ENCODE measurements at regions of chr10 and their contacts with region 1.

Region 1: DNA sequence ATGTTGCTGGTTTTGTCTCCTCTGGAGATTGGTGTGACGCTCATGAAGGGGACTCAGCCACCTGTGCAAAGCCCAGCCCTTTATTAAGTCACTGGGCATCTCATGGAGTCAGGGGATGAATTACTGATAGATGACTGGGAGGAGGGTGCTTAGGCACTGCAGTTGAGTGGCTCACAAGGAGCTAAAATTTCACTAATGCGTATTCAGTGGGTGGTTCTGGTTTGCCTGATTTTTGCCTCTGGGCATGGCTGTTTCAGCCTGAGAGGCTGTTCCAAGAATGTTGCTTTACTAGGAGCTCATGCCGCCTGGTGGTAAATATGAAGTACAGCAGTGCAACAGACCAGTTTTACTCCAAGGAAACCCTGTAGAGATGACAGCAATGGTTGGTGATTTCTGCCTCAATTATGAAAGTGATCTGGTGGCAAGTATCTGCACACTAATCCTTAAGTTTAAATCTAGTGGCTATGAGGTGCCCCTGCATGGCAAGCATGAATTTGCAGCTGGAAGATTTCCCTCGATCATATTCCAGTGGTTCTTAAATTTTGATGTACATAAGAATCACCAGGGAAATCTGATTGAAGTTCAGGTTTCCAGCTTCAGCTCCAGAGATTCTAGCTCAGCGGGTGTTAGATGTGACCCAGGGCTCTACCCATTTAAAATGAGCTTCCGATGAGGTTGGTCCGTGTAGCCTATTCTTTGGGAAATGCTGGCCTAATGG is 19.9 kb downstream of the ACTA2 start:
- DNase-seq: no peak
- ATAC-seq: peak; percentile 80
- H3K4me3 ChIP-seq: no peak overlapping the region
- H3K27ac ChIP-seq: peak overlapping the region; percentile 56; the same call in 1 of the 2 replicates
- H3K4me1 ChIP-seq: peaks cover 21% of the 10 kb centered on the region
- H3K27me3 ChIP-seq: no peaks in the 10 kb centered on the region
- CTCF ChIP-seq: peak; percentile 85 to 98 (median 95); a peak in 5 of 6 replicates
- EP300 ChIP-seq: no peak
- POLR2A ChIP-seq: no peak
- RAD21 ChIP-seq: peak; percentile 81

Region 2: GRCh38 chr10:88108115-88108610 is 824.5 kb before region 1 on chr10:
- CTCF ChIA-PET with region 1: no interaction called
- POLR2A ChIA-PET with region 1: no interaction called
- RAD21 ChIA-PET with region 1: no interaction called
- SMC1A ChIA-PET with region 1: no interaction called
- in situ Hi-C with region 1: no loop called
- intact Hi-C with region 1: no loop called
- DNase-seq: peak; percentile 94
- ATAC-seq: peak; percentile 56
- H3K4me3 ChIP-seq: no peak overlapping the region
- H3K27ac ChIP-seq: peak overlapping the region; percentile 92
- H3K4me1 ChIP-seq: peaks cover 92% of the 10 kb centered on the region
- H3K27me3 ChIP-seq: no peaks in the 10 kb centered on the region
- CTCF ChIP-seq: peak; percentile 39 to 46 (median 45); a peak in 5 of 6 replicates
- EP300 ChIP-seq: peak; percentile 69 to 76; a peak in 2 of 4 replicates
- POLR2A ChIP-seq: no peak
- RAD21 ChIP-seq: peak; percentile 41; the same call in 1 of the 2 replicates

Region 3: GRCh38 chr10:88810196-88810961 is 122.3 kb before region 1 on chr10:
- CTCF ChIA-PET with region 1: interaction called, 17 read pairs
- POLR2A ChIA-PET with region 1: no interaction called
- RAD21 ChIA-PET with region 1: interaction called, 10 read pairs
- SMC1A ChIA-PET with region 1: interaction called, 6 read pairs
- in situ Hi-C with region 1: no loop called
- intact Hi-C with region 1: no loop called
- DNase-seq: no peak
- ATAC-seq: peak; percentile 91
- H3K4me3 ChIP-seq: no peak overlapping the region
- H3K27ac ChIP-seq: no peak overlapping the region
- H3K4me1 ChIP-seq: no peaks in the 10 kb centered on the region
- H3K27me3 ChIP-seq: peaks cover 0 to 2% of the 10 kb centered on the region in 2 experiments; a peak in 2 of 4 replicates
- CTCF ChIP-seq: peak; percentile 70 to 77 (median 75)
- EP300 ChIP-seq: no peak
- POLR2A ChIP-seq: no peak
- RAD21 ChIP-seq: peak; percentile 79

Region 4: GRCh38 chr10:88841316-88842111 is 91.2 kb before region 1 on chr10:
- CTCF ChIA-PET with region 1: interaction called, 895 read pairs
- POLR2A ChIA-PET with region 1: interaction called, 64 read pairs
- RAD21 ChIA-PET with region 1: interaction called, 390 read pairs
- SMC1A ChIA-PET with region 1: interaction called, 575 read pairs
- in situ Hi-C with region 1: loop called (anchors 5 kb)
- intact Hi-C with region 1: no loop called
- DNase-seq: no peak
- ATAC-seq: no peak
- H3K4me3 ChIP-seq: no peak overlapping the region
- H3K27ac ChIP-seq: no peak overlapping the region
- H3K4me1 ChIP-seq: peaks cover 5% of the 10 kb centered on the region; the same call in 1 of the 2 replicates
- H3K27me3 ChIP-seq: no peaks in the 10 kb centered on the region
- CTCF ChIP-seq: no peak
- EP300 ChIP-seq: no peak
- POLR2A ChIP-seq: no peak
- RAD21 ChIP-seq: no peak

Region 5: DNA sequence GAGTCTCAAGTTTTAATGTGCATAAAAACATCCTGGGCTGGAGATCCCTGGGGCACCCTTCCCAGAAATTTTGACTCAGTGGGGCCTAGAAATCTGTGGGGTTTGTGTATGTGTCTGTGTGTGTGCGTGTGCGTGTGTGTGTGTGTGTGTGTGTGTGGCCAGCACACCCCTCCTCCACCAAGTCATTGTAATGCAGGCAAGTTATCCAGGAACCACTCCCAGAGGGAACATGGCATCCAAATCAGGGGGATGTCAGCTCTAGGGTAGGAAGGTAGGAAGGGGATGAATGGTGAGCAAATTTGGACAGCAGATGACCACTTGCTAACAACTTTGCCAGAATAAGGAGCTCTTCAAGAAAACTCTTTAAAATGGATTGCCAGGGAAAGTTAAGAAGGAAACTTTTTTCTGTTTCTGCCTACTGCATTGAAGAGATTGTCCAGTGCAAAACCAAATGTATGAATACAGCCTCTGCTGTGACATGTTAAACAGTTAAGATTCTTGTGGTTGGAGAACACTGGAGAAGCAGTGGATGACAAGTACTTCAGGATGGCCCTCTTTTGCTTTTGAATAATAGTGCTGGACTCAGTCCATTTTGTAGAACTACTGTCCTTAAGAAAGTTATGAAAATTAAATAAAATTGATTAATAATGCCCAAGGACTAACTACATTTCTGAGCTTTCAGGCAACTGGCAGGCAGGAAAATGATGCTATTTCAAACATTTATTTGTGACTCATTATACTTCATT is 40.3 kb before region 1 on chr10:
- CTCF ChIA-PET with region 1: interaction called, 64 read pairs
- POLR2A ChIA-PET with region 1: interaction called, 3 read pairs
- RAD21 ChIA-PET with region 1: interaction called, 74 read pairs
- SMC1A ChIA-PET with region 1: interaction called, 110 read pairs
- in situ Hi-C with region 1: no loop called
- intact Hi-C with region 1: no loop called
- DNase-seq: no peak
- ATAC-seq: no peak
- H3K4me3 ChIP-seq: no peak overlapping the region
- H3K27ac ChIP-seq: no peak overlapping the region
- H3K4me1 ChIP-seq: peaks cover 44% of the 10 kb centered on the region
- H3K27me3 ChIP-seq: no peaks in the 10 kb centered on the region
- CTCF ChIP-seq: no peak
- EP300 ChIP-seq: no peak
- POLR2A ChIP-seq: no peak
- RAD21 ChIP-seq: no peak

Region 6: GRCh38 chr10:88944813-88945212 is 12.1 kb after region 1 on chr10:
- CTCF ChIA-PET with region 1: interaction called, 42 read pairs
- POLR2A ChIA-PET with region 1: interaction called, 3 read pairs
- RAD21 ChIA-PET with region 1: interaction called, 21 read pairs
- SMC1A ChIA-PET with region 1: interaction called, 28 read pairs
- in situ Hi-C with region 1: no loop called
- intact Hi-C with region 1: no loop called
- DNase-seq: no peak
- ATAC-seq: peak; percentile 91
- H3K4me3 ChIP-seq: no peak overlapping the region
- H3K27ac ChIP-seq: 0 out of 2 replicates have a peak overlapping the region, but pooled peaks have one; percentile 45
- H3K4me1 ChIP-seq: peaks cover 4% of the 10 kb centered on the region
- H3K27me3 ChIP-seq: no peaks in the 10 kb centered on the region
- CTCF ChIP-seq: no peak
- EP300 ChIP-seq: peak in 1 of 2 experiments; percentile 38; a peak in 1 of 4 replicates
- POLR2A ChIP-seq: no peak
- RAD21 ChIP-seq: no peak

Region 7: GRCh38 chr10:89003344-89003743 is 70.6 kb after region 1 on chr10:
- CTCF ChIA-PET with region 1: interaction called, 10 read pairs
- POLR2A ChIA-PET with region 1: no interaction called
- RAD21 ChIA-PET with region 1: interaction called, 6 read pairs
- SMC1A ChIA-PET with region 1: interaction called, 10 read pairs
- in situ Hi-C with region 1: no loop called
- intact Hi-C with region 1: no loop called
- DNase-seq: no peak
- ATAC-seq: peak; percentile 22
- H3K4me3 ChIP-seq: no peak overlapping the region
- H3K27ac ChIP-seq: no peak overlapping the region; the same call in 1 of the 2 replicates
- H3K4me1 ChIP-seq: peaks cover 35% of the 10 kb centered on the region
- H3K27me3 ChIP-seq: no peaks in the 10 kb centered on the region
- CTCF ChIP-seq: no peak
- EP300 ChIP-seq: no peak
- POLR2A ChIP-seq: no peak
- RAD21 ChIP-seq: no peak

Region 8: GRCh38 chr10:89217057-89217990 is 284.6 kb after region 1 on chr10:
- CTCF ChIA-PET with region 1: interaction called, 117 read pairs
- POLR2A ChIA-PET with region 1: interaction called, 5 read pairs
- RAD21 ChIA-PET with region 1: interaction called, 21 read pairs
- SMC1A ChIA-PET with region 1: interaction called, 59 read pairs
- in situ Hi-C with region 1: loop called (anchors 5 kb)
- intact Hi-C with region 1: loop called (anchors 1 kb)
- DNase-seq: peak; percentile 12
- ATAC-seq: peak; percentile 83
- H3K4me3 ChIP-seq: no peak overlapping the region
- H3K27ac ChIP-seq: no peak overlapping the region
- H3K4me1 ChIP-seq: peaks cover 3% of the 10 kb centered on the region; the same call in 1 of the 2 replicates
- H3K27me3 ChIP-seq: no peaks in the 10 kb centered on the region
- CTCF ChIP-seq: peak; percentile 50 to 66 (median 64)
- EP300 ChIP-seq: no peak
- POLR2A ChIP-seq: no peak
- RAD21 ChIP-seq: peak; percentile 77

Measured in GM12878 (cell line).